SK-N-SH (cell line): ENCODE measurements at regions of chr10 and their contacts with region 1.

Region 1: DNA sequence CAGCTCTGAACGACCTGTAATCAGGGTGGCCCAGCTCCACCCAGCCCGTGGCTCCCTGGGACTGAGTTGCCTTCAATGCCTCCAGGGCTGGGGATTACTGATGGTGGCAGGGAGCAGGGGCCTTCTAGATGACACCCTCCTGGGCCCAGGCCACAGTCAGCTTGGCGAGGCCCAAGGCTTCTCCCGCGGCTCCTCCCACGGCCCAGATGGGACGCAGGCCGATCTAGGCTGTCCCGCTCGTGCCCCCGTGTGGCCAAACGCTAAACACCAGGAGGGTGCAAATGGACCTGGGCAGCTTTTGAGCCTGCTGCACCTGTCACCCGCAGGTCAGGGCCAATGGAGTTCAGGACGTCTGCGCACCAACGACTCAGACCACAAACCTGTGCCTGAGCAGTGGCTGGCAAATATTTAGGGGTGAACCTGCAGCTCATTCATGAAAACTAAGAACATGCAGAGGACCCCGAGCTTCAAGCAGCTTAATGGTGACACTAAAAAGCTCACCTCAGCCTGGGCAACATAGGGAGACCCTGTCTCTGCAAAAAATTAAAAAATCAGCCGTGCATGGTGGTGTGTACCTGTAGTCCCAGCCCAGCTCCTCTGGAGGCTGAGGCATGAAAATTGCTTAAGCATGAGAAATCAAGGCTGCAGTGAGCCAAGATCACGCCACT is 43.2 kb downstream of the ASB13 start:
- DNase-seq: peak; percentile 91
- H3K4me3 ChIP-seq: no peak overlapping the region
- H3K27ac ChIP-seq: peak overlapping the region in 1 of 2 experiments; percentile 58; a peak in 2 of 4 replicates
- H3K4me1 ChIP-seq: peaks cover 7 to 19% of the 10 kb centered on the region in 2 experiments; a peak in 2 of 4 replicates
- H3K27me3 ChIP-seq: no peaks in the 10 kb centered on the region
- CTCF ChIP-seq: peak; percentile 90
- EP300 ChIP-seq: no peak
- RAD21 ChIP-seq: peak; percentile 91

Region 2: DNA sequence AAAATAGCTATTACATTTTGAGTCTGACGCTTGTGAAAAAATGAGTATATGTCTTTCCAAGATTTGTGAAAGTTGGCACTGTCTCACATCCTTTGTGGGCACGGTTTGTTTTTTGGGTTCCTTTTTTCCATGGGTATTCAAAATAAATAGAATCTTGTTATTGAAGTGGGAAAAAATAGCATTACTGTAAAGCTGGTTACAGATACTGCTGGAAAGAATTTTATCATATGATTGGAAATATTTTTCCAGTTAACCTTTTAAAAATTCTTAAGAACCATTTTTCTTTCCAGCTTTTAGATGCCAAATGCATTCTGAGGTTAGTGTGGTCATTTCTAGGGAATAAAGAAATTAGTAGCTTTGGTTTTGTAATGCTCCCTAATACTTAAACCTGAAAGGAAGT is 199.4 kb before region 1 on chr10:
- CTCF ChIA-PET with region 1: interaction called, 25 read pairs
- POLR2A ChIA-PET with region 1: no interaction called
- DNase-seq: no peak
- H3K4me3 ChIP-seq: no peak overlapping the region
- H3K27ac ChIP-seq: peak overlapping the region in 1 of 2 experiments; percentile 21; a peak in 1 of 4 replicates
- H3K4me1 ChIP-seq: peaks cover 0 to 9% of the 10 kb centered on the region in 2 experiments; a peak in 2 of 4 replicates
- H3K27me3 ChIP-seq: no peaks in the 10 kb centered on the region
- CTCF ChIP-seq: no peak
- EP300 ChIP-seq: no peak
- RAD21 ChIP-seq: no peak

Region 3: GRCh38 chr10:5453749-5454489 is 169.3 kb before region 1 on chr10:
- CTCF ChIA-PET with region 1: interaction called, 449 read pairs
- POLR2A ChIA-PET with region 1: no interaction called
- DNase-seq: no peak
- H3K4me3 ChIP-seq: no peak overlapping the region
- H3K27ac ChIP-seq: no peak overlapping the region
- H3K4me1 ChIP-seq: peaks cover 2 to 5% of the 10 kb centered on the region in 2 experiments; a peak in 2 of 4 replicates
- H3K27me3 ChIP-seq: no peaks in the 10 kb centered on the region
- CTCF ChIP-seq: no peak
- EP300 ChIP-seq: no peak
- RAD21 ChIP-seq: no peak

Region 4: GRCh38 chr10:5565671-5566577 is 57.3 kb before region 1 on chr10:
- CTCF ChIA-PET with region 1: interaction called, 14 read pairs
- POLR2A ChIA-PET with region 1: no interaction called
- DNase-seq: no peak
- H3K4me3 ChIP-seq: no peak overlapping the region
- H3K27ac ChIP-seq: no peak overlapping the region
- H3K4me1 ChIP-seq: peaks cover 0 to 6% of the 10 kb centered on the region in 2 experiments; a peak in 1 of 4 replicates
- H3K27me3 ChIP-seq: no peaks in the 10 kb centered on the region
- CTCF ChIP-seq: no peak
- EP300 ChIP-seq: no peak
- RAD21 ChIP-seq: no peak

Region 5: DNA sequence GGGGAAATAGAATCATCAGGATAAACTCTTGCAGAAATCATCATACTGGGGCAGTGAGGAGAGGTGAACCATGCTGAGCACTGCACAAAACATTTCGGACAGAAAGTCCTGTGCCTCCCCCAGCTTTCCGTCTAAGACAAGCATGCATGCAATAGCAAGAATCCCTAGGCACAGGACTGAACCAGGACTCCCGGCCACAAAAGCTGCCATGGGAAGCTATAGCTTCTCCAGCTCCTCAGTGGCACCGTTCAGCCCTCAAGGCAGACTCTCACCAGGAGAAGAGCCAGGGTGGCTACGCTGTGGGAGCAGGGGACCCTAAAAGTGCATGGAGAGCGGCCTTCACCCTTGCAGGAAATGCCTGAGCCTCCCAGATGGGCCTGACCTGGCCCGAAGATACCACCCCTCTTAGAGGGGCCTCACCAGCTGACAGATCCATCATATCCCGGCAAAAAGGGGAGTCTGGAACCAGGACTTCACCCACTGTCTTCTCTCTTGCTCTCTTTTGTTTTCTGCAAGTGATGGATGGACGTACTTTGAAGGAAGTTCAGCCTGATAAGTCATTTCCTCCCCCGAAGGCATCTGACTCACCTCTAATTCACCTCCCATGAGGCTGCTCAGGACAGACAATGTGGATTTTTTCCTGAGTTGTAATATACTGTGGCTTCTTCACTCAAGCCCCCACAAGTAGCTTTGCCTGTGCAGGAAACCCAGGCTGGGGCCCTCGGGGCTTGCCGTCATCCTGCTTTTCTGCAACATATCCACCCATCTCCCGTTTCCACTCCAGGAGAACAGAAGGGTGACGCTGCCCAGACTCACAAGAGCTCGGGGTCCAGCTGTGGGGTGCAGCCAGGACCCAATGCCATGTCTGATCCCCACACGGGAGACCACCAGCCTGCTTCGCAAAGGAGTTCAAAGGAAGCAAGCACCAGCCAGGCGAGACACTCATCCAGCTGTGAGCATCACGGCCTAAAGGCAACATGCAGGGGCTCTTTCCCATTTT is 27.3 kb before region 1 on chr10:
- CTCF ChIA-PET with region 1: interaction called, 64 read pairs
- POLR2A ChIA-PET with region 1: no interaction called
- DNase-seq: no peak
- H3K4me3 ChIP-seq: peak overlapping the region in 1 of 2 experiments; percentile 29; a peak in 2 of 4 replicates
- H3K27ac ChIP-seq: peak overlapping the region; percentile 82 to 95
- H3K4me1 ChIP-seq: peaks cover 25 to 49% of the 10 kb centered on the region in 2 experiments
- H3K27me3 ChIP-seq: no peaks in the 10 kb centered on the region
- CTCF ChIP-seq: no peak
- EP300 ChIP-seq: peak; percentile 5 to 76; a peak in 2 of 4 replicates
- RAD21 ChIP-seq: no peak

Region 6: DNA sequence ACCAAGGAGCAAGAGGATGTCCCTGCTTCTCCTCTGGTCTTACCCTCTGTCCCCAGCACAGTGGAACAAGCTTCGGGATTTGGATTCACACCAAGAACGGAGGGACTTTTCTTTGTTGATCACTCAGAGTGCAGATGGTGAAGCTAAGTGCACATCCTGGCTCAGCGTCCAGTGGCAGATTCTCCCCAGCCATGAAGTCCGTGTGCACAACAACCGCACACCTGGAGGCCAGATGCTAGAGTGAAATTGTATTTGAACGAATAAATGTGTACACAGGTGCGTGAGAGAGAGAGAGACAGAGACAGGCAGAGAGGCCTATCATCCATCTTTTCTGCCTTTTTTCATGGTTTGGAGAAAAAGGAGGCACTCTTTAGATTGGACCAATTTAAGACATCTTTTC is 11.7 kb after region 1 on chr10:
- CTCF ChIA-PET with region 1: interaction called, 27 read pairs
- POLR2A ChIA-PET with region 1: no interaction called
- DNase-seq: no peak
- H3K4me3 ChIP-seq: no peak overlapping the region
- H3K27ac ChIP-seq: no peak overlapping the region
- H3K4me1 ChIP-seq: peaks cover 0 to 3% of the 10 kb centered on the region in 2 experiments; a peak in 1 of 4 replicates
- H3K27me3 ChIP-seq: no peaks in the 10 kb centered on the region
- CTCF ChIP-seq: no peak
- EP300 ChIP-seq: no peak
- RAD21 ChIP-seq: no peak

Region 7: GRCh38 chr10:5800790-5801189 is 177.6 kb after region 1 on chr10:
- CTCF ChIA-PET with region 1: no interaction called
- POLR2A ChIA-PET with region 1: no interaction called
- DNase-seq: no peak
- H3K4me3 ChIP-seq: no peak overlapping the region
- H3K27ac ChIP-seq: no peak overlapping the region
- H3K4me1 ChIP-seq: no peaks in the 10 kb centered on the region
- H3K27me3 ChIP-seq: no peaks in the 10 kb centered on the region
- CTCF ChIP-seq: no peak
- EP300 ChIP-seq: no peak
- RAD21 ChIP-seq: no peak